Dorsolateral prefrontal cortex (tissue), 120 donors: ENCODE measurements at regions of chr12 and their contacts with region 1.

Region 1: DNA sequence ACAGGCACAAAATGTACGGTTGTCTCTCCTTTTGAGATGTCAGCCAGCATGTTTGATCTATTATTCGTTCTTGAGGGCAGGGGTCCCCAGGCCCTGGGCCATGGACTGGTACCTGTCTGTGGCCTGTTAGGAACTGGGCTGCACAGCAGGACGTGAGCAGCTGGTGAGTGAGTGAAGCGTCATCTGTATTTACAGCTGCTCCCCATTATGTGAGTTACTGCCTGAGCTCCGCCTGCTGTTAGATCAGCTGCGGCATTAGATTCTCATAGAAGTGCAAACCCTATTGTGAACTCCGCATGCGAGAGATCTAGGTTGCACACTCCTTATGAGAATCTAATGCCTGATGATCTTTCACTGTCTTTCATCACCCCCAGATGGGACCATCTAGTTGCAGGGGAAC is 41.4 kb upstream of the SCN8A start:
- DNase-seq: no peak
- H3K4me3 ChIP-seq: no peak overlapping the region
- H3K27ac ChIP-seq: no peak overlapping the region
- H3K27me3 ChIP-seq: peaks cover 0 to 2% (median 0%) of the 10 kb centered on the region in 45 donors
- CTCF ChIP-seq: no peak

Region 2: GRCh38 chr12:51270067-51270970 is 279.3 kb before region 1 on chr12 and contains the start of gene SMAGP:
- intact Hi-C with region 1: loop called in 1 of 2 experiments (anchors 10 kb)
- DNase-seq: peak in 3 of 10 donors; percentile 14 to 48 (median 40)
- H3K4me3 ChIP-seq: peak within 1 kb of the TSS; percentile 48 to 89 (median 71)
- H3K27ac ChIP-seq: peak within 1 kb of the TSS in 6 of 59 donors; percentile 1 to 75 (median 32)
- H3K27me3 ChIP-seq: peaks cover 0 to 26% (median 0%) of the 10 kb centered on the region in 45 donors
- CTCF ChIP-seq: peak in 8 of 56 donors; percentile 6 to 40 (median 12)
- total RNA-seq, gene SMAGP: 0.23 to 3.3 (median 1.4) TPM in 101 of 120 experiments, not detected in the others